IMR-90 (cell line): ENCODE measurements at regions of chr9 and their contacts with region 1.

Region 1: GRCh38 chr9:124831642-124832364 is 21.5 kb upstream of the WDR38 start:
- DNase-seq: no peak
- ATAC-seq: no peak
- H3K4me3 ChIP-seq: no peak overlapping the region
- H3K27ac ChIP-seq: peak overlapping the region; percentile 61; the same call in 1 of the 2 replicates
- H3K4me1 ChIP-seq: peaks cover 24% of the 10 kb centered on the region
- H3K27me3 ChIP-seq: no peaks in the 10 kb centered on the region
- CTCF ChIP-seq: no peak
- POLR2A ChIP-seq: no peak
- RAD21 ChIP-seq: no peak

Region 2: DNA sequence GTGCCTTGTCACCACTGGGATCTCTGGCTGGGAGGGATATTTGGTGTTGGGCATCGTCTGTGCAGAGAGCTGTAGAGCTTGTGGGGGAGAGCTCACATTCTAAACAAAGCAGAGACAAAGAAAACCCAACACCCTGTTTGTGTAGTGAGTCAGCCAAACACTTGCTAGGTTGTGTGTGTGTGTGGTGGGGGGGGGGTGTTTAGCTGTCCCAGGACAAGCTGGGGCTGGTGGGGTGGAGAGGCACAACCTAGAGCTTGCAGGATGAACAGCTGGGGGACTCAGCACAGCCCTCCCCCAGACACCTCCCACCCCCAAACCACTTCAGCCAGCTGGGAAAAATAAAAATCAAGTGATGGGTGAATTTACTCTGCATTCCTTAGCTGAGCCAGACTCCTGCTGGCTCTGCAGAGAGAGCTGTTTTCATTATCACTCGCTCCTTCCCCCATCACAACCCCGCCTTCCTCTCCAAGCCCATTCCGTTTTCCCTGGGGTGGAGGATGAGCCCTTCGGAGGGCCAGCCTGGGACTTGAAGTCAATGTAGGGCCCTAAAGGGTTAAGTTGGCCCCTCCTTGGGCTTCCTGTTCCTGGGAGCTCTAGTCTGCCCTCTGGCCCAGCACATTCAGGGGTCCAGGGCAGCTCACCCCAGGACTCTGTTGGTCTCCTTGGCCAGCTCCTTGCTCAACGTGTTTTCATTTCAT is 52.3 kb before region 1 on chr9:
- CTCF ChIA-PET with region 1: interaction called, 6 read pairs
- POLR2A ChIA-PET with region 1: no interaction called
- dilution Hi-C with region 1: no loop called
- in situ Hi-C with region 1: no loop called
- intact Hi-C with region 1: loop called (anchors 1 kb)
- DNase-seq: peak; percentile 98
- ATAC-seq: peak; percentile 82
- H3K4me3 ChIP-seq: no peak overlapping the region
- H3K27ac ChIP-seq: peak overlapping the region; percentile 94
- H3K4me1 ChIP-seq: peaks cover 20% of the 10 kb centered on the region
- H3K27me3 ChIP-seq: peaks cover 3% of the 10 kb centered on the region; the same call in 1 of the 2 replicates
- CTCF ChIP-seq: no peak
- POLR2A ChIP-seq: no peak
- RAD21 ChIP-seq: no peak; the same call in 1 of the 2 replicates

Region 3: GRCh38 chr9:124818431-124819281 is 13.1 kb before region 1 on chr9:
- CTCF ChIA-PET with region 1: no interaction called
- POLR2A ChIA-PET with region 1: no interaction called
- dilution Hi-C with region 1: no loop called
- in situ Hi-C with region 1: no loop called
- intact Hi-C with region 1: loop called (anchors 1 kb)
- DNase-seq: peak; percentile 74
- ATAC-seq: peak; percentile 73
- H3K4me3 ChIP-seq: no peak overlapping the region
- H3K27ac ChIP-seq: no peak overlapping the region
- H3K4me1 ChIP-seq: peaks cover 11% of the 10 kb centered on the region
- H3K27me3 ChIP-seq: no peaks in the 10 kb centered on the region
- CTCF ChIP-seq: no peak
- POLR2A ChIP-seq: no peak
- RAD21 ChIP-seq: no peak

Region 4: GRCh38 chr9:125089331-125089730 is 257.5 kb after region 1 on chr9:
- CTCF ChIA-PET with region 1: no interaction called
- POLR2A ChIA-PET with region 1: no interaction called
- dilution Hi-C with region 1: no loop called
- in situ Hi-C with region 1: no loop called
- intact Hi-C with region 1: no loop called
- DNase-seq: no peak
- ATAC-seq: no peak
- H3K4me3 ChIP-seq: no peak overlapping the region
- H3K27ac ChIP-seq: no peak overlapping the region
- H3K4me1 ChIP-seq: no peaks in the 10 kb centered on the region
- H3K27me3 ChIP-seq: no peaks in the 10 kb centered on the region
- CTCF ChIP-seq: no peak
- POLR2A ChIP-seq: no peak
- RAD21 ChIP-seq: no peak